Endothelial cell of umbilical vein (primary cell): ENCODE measurements at regions of chrX and their contacts with region 1.

Region 1: DNA sequence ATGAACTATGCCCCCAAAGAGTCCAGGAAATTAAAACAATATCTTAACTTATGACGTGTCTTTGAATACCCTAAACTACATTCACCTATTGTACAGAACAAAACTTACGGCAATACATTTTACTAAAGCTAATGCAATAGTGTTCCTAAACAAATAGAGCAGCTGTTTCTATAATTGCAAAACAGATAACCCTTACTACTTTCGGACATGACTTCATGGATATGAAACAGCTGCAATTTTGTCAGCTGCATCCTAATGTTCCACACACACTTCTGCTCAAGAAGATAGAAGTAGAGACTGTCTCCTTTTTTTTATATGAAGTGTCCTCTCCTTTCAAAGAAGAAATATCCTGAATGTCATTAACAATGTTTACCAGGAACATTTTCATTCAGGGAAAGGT is 174.9 kb downstream of the ACTRT1 start:
- DNase-seq: peak; percentile 67
- H3K4me3 ChIP-seq: no peak overlapping the region
- H3K27ac ChIP-seq: peak overlapping the region; percentile 66
- H3K4me1 ChIP-seq: peaks cover 19% of the 10 kb centered on the region
- H3K27me3 ChIP-seq: no peaks in the 10 kb centered on the region
- CTCF ChIP-seq: no peak
- POLR2A ChIP-seq: no peak

Region 2: GRCh38 chrX:127943571-127943970 is 66.3 kb after region 1 on chrX:
- CTCF ChIA-PET with region 1: no interaction called
- POLR2A ChIA-PET with region 1: no interaction called
- dilution Hi-C with region 1: no loop called
- intact Hi-C with region 1: loop called (anchors 2 kb)
- DNase-seq: no peak
- H3K4me3 ChIP-seq: no peak overlapping the region
- H3K27ac ChIP-seq: peak overlapping the region; percentile 45
- H3K4me1 ChIP-seq: peaks cover 5% of the 10 kb centered on the region
- H3K27me3 ChIP-seq: no peaks in the 10 kb centered on the region
- CTCF ChIP-seq: no peak
- POLR2A ChIP-seq: no peak

Region 3: GRCh38 chrX:128035318-128035717 is 158.0 kb after region 1 on chrX:
- CTCF ChIA-PET with region 1: no interaction called
- POLR2A ChIA-PET with region 1: no interaction called
- dilution Hi-C with region 1: no loop called
- intact Hi-C with region 1: loop called (anchors 1 kb)
- DNase-seq: peak; percentile 76
- H3K4me3 ChIP-seq: no peak overlapping the region
- H3K27ac ChIP-seq: peak overlapping the region; percentile 99
- H3K4me1 ChIP-seq: peaks cover 20% of the 10 kb centered on the region
- H3K27me3 ChIP-seq: no peaks in the 10 kb centered on the region
- CTCF ChIP-seq: no peak
- POLR2A ChIP-seq: no peak